Ascending aorta (tissue), 2 donors: ENCODE measurements at regions of chr21 and their contacts with region 1.

Region 1: DNA sequence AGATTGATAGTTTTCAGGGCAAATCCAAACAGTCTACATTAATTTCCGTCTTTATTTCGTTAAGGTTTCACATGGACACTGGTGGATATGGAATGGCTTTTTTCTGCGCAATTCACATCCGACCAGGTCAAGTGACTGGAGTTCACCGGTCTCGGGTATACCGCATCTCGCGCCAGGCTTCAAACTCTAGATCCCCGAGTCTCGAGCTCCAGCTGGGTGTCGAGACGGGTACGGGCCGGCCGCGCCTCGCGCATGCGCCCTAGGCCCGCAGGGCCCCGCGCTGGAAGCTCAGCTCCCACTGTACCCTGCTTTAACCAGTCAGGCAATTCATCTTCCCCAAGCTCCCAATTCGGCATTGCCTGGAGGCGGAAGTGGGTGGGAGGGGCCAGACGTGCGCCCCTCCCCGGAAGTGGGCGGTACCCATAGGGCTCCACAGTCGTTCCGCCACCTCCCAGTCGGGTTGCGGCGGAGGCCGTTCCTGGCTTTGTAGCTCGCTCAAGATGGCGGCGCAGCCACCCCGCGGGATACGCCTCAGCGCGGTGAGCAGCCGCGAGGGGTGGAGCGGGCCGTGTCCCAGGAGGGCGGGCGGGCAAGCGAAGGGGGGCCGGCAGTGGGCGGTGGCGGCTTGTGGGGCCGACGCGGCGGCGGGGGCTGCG is at the start of gene MORC3:
- DNase-seq: peak; percentile 94 to 99
- H3K4me3 ChIP-seq: peak within 1 kb of the TSS; percentile 87 to 91
- H3K27ac ChIP-seq: peak within 1 kb of the TSS; percentile 97
- H3K4me1 ChIP-seq: peaks cover 0 to 21% of the 10 kb centered on the region in 2 donors
- H3K27me3 ChIP-seq: no peaks in the 10 kb centered on the region
- CTCF ChIP-seq: no peak
- total RNA-seq, gene MORC3: 7.9 TPM

Region 2: GRCh38 chr21:36060159-36060921 is 259.6 kb before region 1 on chr21 and contains the start of gene SETD4:
- intact Hi-C with region 1: loop called (anchors 1 kb)
- DNase-seq: peak; percentile 63 to 95
- H3K4me3 ChIP-seq: peak within 1 kb of the TSS; percentile 80 to 81
- H3K27ac ChIP-seq: peak within 1 kb of the TSS; percentile 91 to 93
- H3K4me1 ChIP-seq: peaks cover 0 to 11% of the 10 kb centered on the region in 2 donors
- H3K27me3 ChIP-seq: no peaks in the 10 kb centered on the region
- CTCF ChIP-seq: no peak
- total RNA-seq, gene SETD4: 35.9 TPM

Region 3: DNA sequence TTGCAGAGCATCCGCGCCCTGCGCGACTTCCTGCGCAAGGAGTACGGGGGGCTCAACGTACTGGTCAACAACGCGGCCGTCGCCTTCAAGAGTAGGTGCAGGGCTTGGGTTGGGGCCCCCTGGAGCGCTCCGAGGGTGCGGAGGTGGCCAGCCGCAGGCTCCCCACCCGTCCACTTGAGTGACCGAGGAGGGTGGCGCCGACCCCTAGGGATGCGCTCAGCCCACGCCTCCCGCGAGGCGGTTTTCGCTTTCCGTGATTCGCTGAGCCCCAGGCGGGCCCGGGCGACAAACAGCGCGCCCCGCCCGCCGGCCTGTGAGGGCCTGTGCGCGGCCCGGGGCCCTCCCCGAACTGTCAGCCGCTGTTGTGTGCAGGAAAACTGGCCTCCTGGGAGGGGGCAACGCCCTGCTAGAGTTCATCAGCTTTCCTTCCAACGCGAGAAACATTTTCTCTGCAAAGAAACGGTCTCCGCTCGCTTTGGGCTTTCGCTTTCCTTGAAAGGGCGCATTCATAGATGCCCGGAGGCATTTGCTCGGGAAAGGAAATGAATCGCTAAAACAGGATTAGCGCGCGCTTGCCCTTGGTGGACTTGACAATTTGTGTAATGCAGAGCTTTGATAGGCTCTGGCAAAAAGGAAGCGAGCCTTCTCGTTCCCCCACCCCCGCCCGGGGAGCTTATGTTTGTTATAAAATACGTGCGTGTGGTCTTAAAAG is 184.3 kb before region 1 on chr21:
- intact Hi-C with region 1: loop called (anchors 2 kb)
- DNase-seq: peak in 1 of 2 donors; percentile 83
- H3K4me3 ChIP-seq: peak overlapping the region; percentile 79 to 86
- H3K27ac ChIP-seq: peak overlapping the region; percentile 89 to 90
- H3K4me1 ChIP-seq: peaks cover 0 to 11% of the 10 kb centered on the region in 2 donors
- H3K27me3 ChIP-seq: no peaks in the 10 kb centered on the region
- CTCF ChIP-seq: no peak

Region 4: GRCh38 chr21:36163750-36164741 is 155.8 kb before region 1 on chr21:
- intact Hi-C with region 1: no loop called
- DNase-seq: no peak
- H3K4me3 ChIP-seq: no peak overlapping the region
- H3K27ac ChIP-seq: no peak overlapping the region
- H3K4me1 ChIP-seq: no peaks in the 10 kb centered on the region
- H3K27me3 ChIP-seq: no peaks in the 10 kb centered on the region
- CTCF ChIP-seq: no peak

Region 5: DNA sequence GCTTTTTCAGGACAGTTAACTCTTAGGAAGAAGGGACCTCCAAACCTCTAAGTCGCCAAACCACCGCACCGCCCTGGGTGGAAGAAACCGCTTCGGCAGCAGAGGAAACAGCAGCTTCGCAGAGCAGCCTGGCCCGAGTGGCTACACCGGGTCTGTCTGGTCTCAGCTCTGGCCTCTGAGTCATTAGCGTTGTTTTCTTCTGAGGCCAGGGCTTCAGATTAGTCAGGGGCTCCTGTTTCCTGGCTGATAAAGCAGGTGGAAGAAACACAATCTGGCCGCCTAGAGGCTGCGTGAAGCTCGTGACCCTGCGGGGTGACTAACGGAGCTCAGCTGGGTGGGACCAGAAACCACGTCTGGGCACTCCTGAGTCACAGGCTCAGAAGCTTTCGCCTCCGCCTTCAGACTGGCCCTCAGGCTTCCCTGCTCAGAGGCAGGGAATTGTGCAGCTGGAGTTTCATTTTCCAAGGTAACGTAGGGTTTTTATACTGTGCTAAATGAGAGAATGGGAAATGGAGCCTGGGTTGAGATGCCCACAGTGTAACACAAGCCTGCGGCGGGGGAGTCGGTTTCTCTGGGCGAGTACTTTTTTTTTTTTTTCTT is 110.2 kb after region 1 on chr21:
- intact Hi-C with region 1: loop called (anchors 10 kb)
- DNase-seq: peak; percentile 88 to 95
- H3K4me3 ChIP-seq: peak overlapping the region; percentile 35 to 53
- H3K27ac ChIP-seq: peak overlapping the region; percentile 79 to 87
- H3K4me1 ChIP-seq: peaks cover 0 to 15% of the 10 kb centered on the region in 2 donors
- H3K27me3 ChIP-seq: no peaks in the 10 kb centered on the region
- CTCF ChIP-seq: peak in 2 of 3 experiments; percentile 4 to 36

Region 6: DNA sequence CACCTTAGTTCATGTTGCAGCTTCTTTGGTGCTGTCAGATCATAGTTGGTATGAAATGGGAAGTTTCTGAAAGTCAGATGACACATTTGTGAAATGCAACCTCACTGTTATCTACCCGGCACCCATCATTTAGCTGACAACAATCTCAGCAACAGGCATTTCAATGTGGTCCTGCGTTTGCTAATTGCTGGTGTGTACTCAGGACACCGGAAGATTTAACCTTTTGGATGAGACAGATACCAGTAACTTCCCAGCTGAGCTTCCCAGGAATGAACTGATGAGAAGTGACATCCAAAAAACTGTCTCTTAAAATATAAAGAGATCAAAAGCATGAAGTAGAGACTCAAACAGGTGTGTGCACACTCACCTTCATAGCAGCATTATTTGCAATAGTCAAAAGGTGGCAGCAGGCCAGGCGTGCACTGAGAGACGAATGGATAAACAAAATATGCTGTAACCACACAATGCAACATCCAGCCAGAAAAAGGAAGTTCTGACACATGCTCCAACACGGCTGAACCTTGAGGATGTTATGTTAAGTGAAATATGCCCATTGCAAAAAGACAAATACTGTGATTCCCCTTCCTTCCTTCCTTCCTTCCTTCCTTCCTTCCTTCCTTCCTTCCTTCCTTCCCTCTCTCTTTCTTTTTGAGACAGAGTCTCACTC is 167.9 kb after region 1 on chr21:
- intact Hi-C with region 1: no loop called
- DNase-seq: no peak
- H3K4me3 ChIP-seq: no peak overlapping the region
- H3K27ac ChIP-seq: no peak overlapping the region
- H3K4me1 ChIP-seq: no peaks in the 10 kb centered on the region
- H3K27me3 ChIP-seq: no peaks in the 10 kb centered on the region
- CTCF ChIP-seq: no peak